Panc1 (cell line): ENCODE measurements at regions of chr9 and their contacts with region 1.

Region 1: DNA sequence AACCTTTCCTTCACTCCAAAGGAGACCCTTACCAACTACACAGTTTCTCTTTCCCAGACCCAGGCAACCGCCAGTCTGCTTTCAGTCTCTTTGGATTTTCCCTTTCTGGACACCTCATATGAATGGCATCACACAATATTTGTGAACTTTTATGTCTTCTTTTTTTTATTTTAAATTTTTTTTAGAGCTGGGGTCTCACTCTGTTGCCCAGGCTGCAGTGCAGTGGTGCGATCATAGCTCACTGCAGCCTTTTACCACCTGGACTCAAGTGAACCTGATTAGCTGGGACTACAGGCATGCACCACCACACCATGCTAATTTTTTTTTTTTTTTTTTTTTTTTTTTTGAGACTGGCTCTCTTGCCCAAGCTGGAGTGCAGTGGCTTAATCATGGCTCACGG is 37.5 kb downstream of the UBAP1 start:
- DNase-seq: no peak
- ATAC-seq: no peak
- H3K4me3 ChIP-seq: no peak overlapping the region
- H3K27ac ChIP-seq: no peak overlapping the region
- H3K4me1 ChIP-seq: peaks cover 8% of the 10 kb centered on the region; the same call in 1 of the 2 replicates
- H3K27me3 ChIP-seq: no peaks in the 10 kb centered on the region
- CTCF ChIP-seq: no peak

Region 2: GRCh38 chr9:34246453-34246852 is 30.1 kb after region 1 on chr9:
- CTCF ChIA-PET with region 1: no interaction called
- POLR2A ChIA-PET with region 1: interaction called, 17 read pairs
- in situ Hi-C with region 1: no loop called
- intact Hi-C with region 1: no loop called
- DNase-seq: no peak
- ATAC-seq: no peak
- H3K4me3 ChIP-seq: no peak overlapping the region
- H3K27ac ChIP-seq: no peak overlapping the region
- H3K4me1 ChIP-seq: no peaks in the 10 kb centered on the region; the same call in 1 of the 2 replicates
- H3K27me3 ChIP-seq: no peaks in the 10 kb centered on the region
- CTCF ChIP-seq: no peak